GM10248 (cell line): ENCODE measurements at regions of chr3 and their contacts with region 1.

Region 1: GRCh38 chr3:152151216-152151876 is 117.4 kb upstream of the MBNL1 start:
- DNase-seq: no peak
- CTCF ChIP-seq: no peak

Region 2: DNA sequence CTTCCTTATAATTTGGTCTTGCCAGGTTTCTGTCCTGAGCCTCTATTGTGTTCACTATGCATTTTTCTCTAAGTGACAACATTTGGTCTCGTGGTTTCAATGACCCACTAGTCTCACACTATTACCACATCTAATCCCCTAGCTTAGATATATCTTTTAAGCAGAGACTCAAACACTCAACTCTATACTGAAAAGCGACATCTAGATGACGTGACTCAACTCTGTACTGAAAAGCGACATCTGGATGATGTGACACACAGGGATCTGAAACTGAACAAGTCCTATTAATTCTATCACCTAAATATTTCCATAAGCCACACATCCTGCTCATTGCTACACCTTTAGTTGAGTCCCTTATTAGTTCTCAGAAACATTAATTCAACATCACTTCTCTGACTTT is 24.3 kb before region 1 on chr3:
- CTCF ChIA-PET with region 1: no interaction called
- POLR2A ChIA-PET with region 1: no interaction called
- DNase-seq: peak; percentile 68
- CTCF ChIP-seq: no peak

Region 3: GRCh38 chr3:152139651-152140050 is 11.7 kb before region 1 on chr3:
- CTCF ChIA-PET with region 1: interaction called, 11 read pairs
- POLR2A ChIA-PET with region 1: no interaction called
- DNase-seq: no peak
- CTCF ChIP-seq: no peak

Region 4: DNA sequence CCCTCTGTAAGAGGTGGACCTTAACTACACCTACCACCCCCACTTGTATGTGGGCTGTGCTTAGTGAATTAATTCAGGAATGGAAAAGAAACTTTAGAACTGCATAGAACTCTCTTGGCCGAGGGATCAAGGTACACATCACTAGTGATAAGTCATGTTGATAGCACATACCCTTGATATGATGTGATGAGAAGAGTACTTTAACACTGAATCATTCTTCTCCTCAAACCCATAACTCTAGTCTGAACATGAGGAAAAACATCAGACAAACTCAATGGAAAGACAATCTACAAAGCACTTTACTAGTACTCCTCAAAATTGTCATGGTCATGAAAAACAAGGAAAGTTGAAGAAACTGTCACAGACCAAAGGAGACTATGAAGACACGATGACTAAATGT is 771.2 kb after region 1 on chr3:
- CTCF ChIA-PET with region 1: no interaction called
- POLR2A ChIA-PET with region 1: no interaction called
- DNase-seq: no peak
- CTCF ChIP-seq: no peak